ENCODE measurements at regions of chr2 and their contacts with region 1.

Region 1: GRCh38 chr2:100427628-100428258 is 10.3 kb upstream of the CHST10 start:
- DNase-seq: peak; percentile 39
- H3K4me3 ChIP-seq: no peak overlapping the region
- H3K27ac ChIP-seq: no peak overlapping the region
- H3K4me1 ChIP-seq: no peaks in the 10 kb centered on the region
- H3K27me3 ChIP-seq: no peaks in the 10 kb centered on the region
- CTCF ChIP-seq: peak in 3 of 4 experiments; percentile 19 to 41 (median 20)
- POLR2A ChIP-seq: no peak

Region 2: GRCh38 chr2:100554798-100555407 is 127.2 kb after region 1 on chr2:
- intact Hi-C with region 1: loop called (anchors 5 kb)
- DNase-seq: no peak
- H3K4me3 ChIP-seq: no peak overlapping the region
- H3K27ac ChIP-seq: no peak overlapping the region
- H3K4me1 ChIP-seq: no peaks in the 10 kb centered on the region
- H3K27me3 ChIP-seq: no peaks in the 10 kb centered on the region
- CTCF ChIP-seq: no peak
- POLR2A ChIP-seq: no peak

Region 3: GRCh38 chr2:100603948-100604633 is 176.3 kb after region 1 on chr2:
- intact Hi-C with region 1: no loop called
- DNase-seq: no peak
- H3K4me3 ChIP-seq: no peak overlapping the region
- H3K27ac ChIP-seq: no peak overlapping the region
- H3K4me1 ChIP-seq: no peaks in the 10 kb centered on the region
- H3K27me3 ChIP-seq: no peaks in the 10 kb centered on the region
- CTCF ChIP-seq: no peak
- POLR2A ChIP-seq: no peak

Region 4: GRCh38 chr2:100902833-100903405 is 475.2 kb after region 1 on chr2:
- intact Hi-C with region 1: no loop called
- DNase-seq: no peak
- H3K4me3 ChIP-seq: no peak overlapping the region
- H3K27ac ChIP-seq: peak overlapping the region in 1 of 2 donors; percentile 2
- H3K4me1 ChIP-seq: no peaks in the 10 kb centered on the region
- H3K27me3 ChIP-seq: no peaks in the 10 kb centered on the region
- CTCF ChIP-seq: peak in 2 of 4 experiments; percentile 7 to 22
- POLR2A ChIP-seq: no peak

Measured in prostate gland (tissue), 2 donors.